ENCODE measurements at regions of chr12 and their contacts with region 1.

Region 1: GRCh38 chr12:49828133-49829091 is at the start of gene NCKAP5L:
- DNase-seq: peak; percentile 98
- H3K4me3 ChIP-seq: peak within 1 kb of the TSS; percentile 71
- H3K27ac ChIP-seq: peak within 1 kb of the TSS; percentile 83
- H3K4me1 ChIP-seq: peaks cover 32% of the 10 kb centered on the region
- H3K27me3 ChIP-seq: no peaks in the 10 kb centered on the region
- CTCF ChIP-seq: no peak
- total RNA-seq, gene NCKAP5L: 28.2 and 29.0 TPM in 2 replicates

Region 2: DNA sequence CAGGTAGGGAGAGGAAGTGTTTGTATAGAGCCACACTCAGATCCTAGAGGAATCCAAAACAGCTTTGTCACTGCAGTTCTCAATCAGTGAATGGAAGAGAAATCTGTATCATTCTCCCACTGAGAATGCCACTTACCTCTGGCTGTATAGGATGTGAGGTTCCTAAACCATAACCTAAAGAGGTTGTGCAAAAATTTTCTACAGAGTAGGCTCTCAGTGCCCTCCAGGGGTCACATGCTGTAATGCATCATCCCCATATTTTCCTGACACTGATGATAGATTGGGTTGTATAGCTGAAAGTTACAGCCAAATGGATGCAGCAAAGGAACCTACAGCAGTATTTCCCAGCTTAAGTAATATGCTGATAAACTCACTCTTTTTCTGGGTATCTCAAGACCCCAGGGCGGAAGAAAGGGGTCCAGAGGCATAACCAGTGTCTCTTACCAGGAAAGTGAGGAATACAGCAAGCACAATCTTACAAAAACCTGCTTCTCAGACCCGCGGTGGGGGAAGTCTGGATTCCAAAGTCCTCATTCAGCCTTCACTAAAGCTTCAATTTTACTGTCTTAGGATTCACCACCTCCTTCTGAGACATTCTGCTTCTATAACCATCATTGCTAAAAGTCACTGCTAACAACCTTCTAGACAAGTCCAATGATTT is 10.7 kb after region 1 on chr12:
- CTCF ChIA-PET with region 1: interaction called, 6 read pairs
- POLR2A ChIA-PET with region 1: interaction called, 12 read pairs
- intact Hi-C with region 1: no loop called
- DNase-seq: peak; percentile 67
- H3K4me3 ChIP-seq: no peak overlapping the region
- H3K27ac ChIP-seq: no peak overlapping the region
- H3K4me1 ChIP-seq: peaks cover 15% of the 10 kb centered on the region
- H3K27me3 ChIP-seq: no peaks in the 10 kb centered on the region
- CTCF ChIP-seq: peak; percentile 76

Region 3: DNA sequence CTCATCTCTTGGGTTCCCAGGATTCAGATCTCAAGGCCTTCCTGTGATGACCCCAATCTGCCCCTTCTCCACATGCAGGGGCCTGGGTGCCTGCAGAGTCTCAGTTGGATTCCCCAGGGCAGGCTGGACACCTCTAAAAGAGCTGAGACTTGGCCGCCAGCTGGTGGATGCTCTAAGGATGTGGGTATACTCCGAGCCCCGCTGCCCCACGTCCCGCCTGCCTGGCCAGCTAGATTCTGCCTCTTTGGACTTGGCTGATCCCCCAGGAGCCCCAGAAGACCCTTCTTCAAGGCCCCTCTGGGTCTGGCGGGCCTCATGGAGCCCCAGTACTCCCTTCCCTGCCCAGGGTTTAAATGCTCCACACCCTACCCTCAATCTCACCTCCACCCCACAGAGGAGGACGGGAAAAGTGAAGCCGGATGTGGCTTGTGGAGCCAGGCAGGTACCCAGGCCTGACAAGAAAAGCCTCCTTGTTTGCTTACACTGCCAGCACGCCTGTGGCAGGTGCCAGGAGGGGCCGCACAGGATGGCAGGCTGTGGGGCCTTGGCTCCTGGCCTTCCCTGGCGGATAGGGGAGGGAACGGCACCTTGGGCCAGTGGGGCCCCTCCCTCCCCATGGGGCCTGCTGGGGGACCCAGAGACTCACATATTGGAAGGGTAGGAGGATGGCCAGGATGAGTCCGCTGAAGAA is 60.2 kb after region 1 on chr12:
- CTCF ChIA-PET with region 1: no interaction called
- POLR2A ChIA-PET with region 1: no interaction called
- intact Hi-C with region 1: no loop called
- DNase-seq: no peak
- H3K4me3 ChIP-seq: no peak overlapping the region
- H3K27ac ChIP-seq: no peak overlapping the region
- H3K4me1 ChIP-seq: no peaks in the 10 kb centered on the region
- H3K27me3 ChIP-seq: no peaks in the 10 kb centered on the region
- CTCF ChIP-seq: no peak

Region 4: DNA sequence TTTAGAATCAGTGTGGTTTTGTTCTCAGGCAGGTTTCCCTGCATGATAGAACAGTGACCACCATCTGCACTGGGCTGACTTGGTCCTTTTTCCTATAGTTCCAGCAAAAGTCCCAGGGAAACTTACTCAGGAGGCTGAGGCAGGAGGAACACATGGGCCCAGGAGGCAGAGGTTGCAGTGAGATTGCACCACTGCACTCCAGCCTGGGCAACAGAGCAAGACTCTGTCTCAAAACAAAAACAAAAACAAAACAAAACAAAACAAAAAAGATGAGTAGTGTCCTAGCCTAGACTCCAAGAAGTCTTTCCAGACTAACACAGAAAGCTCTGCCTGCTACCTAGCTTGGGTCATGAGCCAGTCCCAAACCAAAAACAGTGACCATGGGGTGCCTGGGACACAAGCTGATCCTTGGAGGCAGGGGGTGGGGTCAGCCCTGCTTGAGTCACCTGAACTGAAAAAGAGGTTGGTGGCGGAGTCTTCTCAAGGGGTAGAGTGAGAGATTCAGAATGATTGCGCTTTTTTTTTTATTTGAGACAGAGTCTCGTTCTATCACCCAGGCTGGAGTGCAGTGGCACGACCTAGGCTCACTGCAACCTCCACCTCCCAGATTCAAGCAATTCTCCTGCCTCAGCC is 1205.2 kb after region 1 on chr12:
- CTCF ChIA-PET with region 1: no interaction called
- POLR2A ChIA-PET with region 1: interaction called, 11 read pairs
- intact Hi-C with region 1: no loop called
- DNase-seq: no peak
- H3K4me3 ChIP-seq: no peak overlapping the region
- H3K27ac ChIP-seq: no peak overlapping the region
- H3K4me1 ChIP-seq: no peaks in the 10 kb centered on the region
- H3K27me3 ChIP-seq: no peaks in the 10 kb centered on the region
- CTCF ChIP-seq: no peak